ENCODE measurements at regions of chr17 and their contacts with region 1.

Region 1: GRCh38 chr17:17237026-17237799 is at the start of gene FLCN:
- DNase-seq: peak; percentile 92
- H3K4me3 ChIP-seq: peak within 1 kb of the TSS; percentile 86
- H3K27ac ChIP-seq: peak within 1 kb of the TSS; percentile 40
- H3K4me1 ChIP-seq: peaks cover 22% of the 10 kb centered on the region
- CTCF ChIP-seq: no peak
- total RNA-seq, gene FLCN: 12.9 and 20.9 TPM in 2 replicates

Region 2: DNA sequence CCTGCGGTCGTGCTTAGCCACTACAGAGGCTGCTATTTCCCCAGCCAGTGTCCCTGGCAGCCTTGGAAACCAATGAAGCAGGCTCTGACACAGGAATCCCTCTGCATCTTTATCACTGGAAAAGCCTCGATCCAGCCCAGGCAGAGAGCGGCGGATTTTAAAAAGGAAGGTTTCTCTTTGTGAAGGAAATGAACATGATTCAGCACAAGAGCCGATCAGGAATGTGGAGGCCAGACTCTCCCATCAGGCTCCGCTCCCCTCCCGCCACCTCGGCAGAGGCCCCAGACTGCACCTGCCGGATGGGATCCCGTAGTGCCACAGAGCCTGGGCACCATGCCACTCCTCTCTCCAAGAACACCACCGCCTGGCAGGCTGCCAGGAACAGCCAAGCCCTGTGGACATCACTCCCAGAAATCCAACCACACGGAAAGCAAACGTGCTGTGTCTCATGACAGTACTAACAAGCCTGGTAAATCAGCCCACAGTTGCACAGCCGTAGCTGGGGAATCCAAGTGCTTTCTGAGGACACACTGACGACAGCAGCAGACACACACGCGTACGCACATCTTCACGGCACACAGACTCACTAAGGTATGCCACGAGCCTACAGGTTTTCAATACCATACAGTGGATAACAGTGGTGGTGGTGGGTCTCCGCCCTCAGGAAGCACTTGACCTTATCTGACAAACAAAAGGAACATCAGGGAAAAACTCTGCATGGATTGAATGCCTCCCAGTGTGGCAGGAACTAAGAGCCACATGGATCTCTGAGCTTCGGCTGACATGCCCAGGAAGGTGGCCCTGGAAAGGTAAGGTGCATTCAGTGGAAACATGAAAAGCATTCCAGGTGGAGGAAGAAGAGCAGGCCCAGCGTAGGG is 750.6 kb before region 1 on chr17:
- CTCF ChIA-PET with region 1: no interaction called
- POLR2A ChIA-PET with region 1: no interaction called
- intact Hi-C with region 1: no loop called
- DNase-seq: no peak
- H3K4me3 ChIP-seq: no peak overlapping the region
- H3K27ac ChIP-seq: no peak overlapping the region
- H3K4me1 ChIP-seq: no peaks in the 10 kb centered on the region
- CTCF ChIP-seq: no peak

Region 3: GRCh38 chr17:16653209-16654041 is 583.8 kb before region 1 on chr17 and contains the start of gene ZNF624:
- CTCF ChIA-PET with region 1: no interaction called
- POLR2A ChIA-PET with region 1: no interaction called
- intact Hi-C with region 1: loop called (anchors 5 kb)
- DNase-seq: peak; percentile 93
- H3K4me3 ChIP-seq: peak within 1 kb of the TSS; percentile 84
- H3K27ac ChIP-seq: peak within 1 kb of the TSS; percentile 38
- H3K4me1 ChIP-seq: peaks cover 6% of the 10 kb centered on the region
- CTCF ChIP-seq: no peak
- total RNA-seq, gene ZNF624: 3.5 and 4.0 TPM in 2 replicates

Region 4: GRCh38 chr17:17206124-17206912 is 30.9 kb before region 1 on chr17 and contains the start of gene PLD6:
- CTCF ChIA-PET with region 1: no interaction called
- POLR2A ChIA-PET with region 1: no interaction called
- intact Hi-C with region 1: no loop called
- DNase-seq: no peak
- H3K4me3 ChIP-seq: no peak within 1 kb of the TSS
- H3K27ac ChIP-seq: no peak within 1 kb of the TSS
- H3K4me1 ChIP-seq: no peaks in the 10 kb centered on the region
- CTCF ChIP-seq: no peak
- total RNA-seq, gene PLD6: not detected in 2 replicates

Region 5: DNA sequence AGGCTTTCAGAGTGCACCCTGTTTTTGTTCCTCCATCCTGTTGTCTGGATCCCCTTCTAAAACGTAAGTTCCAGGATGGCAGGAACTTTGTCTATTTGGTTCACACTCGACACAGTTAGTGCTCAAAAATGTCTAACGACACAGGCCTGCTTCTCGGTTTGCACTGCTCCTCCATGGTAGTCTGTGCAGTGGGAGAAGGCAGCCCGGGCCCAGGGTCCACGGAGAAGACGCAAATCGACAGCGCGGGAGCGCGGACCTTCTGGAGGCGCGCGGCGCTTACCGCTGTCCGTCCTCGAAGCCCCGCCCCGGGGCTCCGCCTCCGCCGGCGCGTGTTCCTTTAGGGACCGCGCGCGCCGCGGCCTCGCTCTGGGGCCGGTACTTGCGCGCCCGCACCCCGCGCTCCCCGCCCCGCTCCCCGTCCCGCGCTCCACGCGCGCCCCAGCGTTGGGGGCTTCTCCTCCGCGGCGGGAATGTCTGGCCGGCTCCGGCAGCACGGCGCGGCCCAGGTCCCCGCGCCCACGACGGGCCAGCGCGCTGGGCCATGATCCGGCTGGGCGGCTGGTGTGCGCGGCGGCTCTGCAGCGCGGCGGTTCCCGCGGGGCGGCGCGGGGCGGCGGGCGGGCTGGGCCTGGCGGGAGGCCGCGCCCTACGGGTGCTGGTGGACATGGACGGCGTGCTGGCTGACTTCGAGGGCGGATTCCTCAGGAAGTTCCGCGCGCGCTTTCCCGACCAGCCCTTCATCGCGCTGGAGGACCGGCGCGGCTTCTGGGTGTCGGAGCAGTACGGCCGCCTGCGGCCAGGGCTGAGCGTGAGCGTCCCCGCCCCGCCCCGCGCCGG is 66.0 kb after region 1 on chr17 and contains the start of gene NT5M:
- CTCF ChIA-PET with region 1: no interaction called
- POLR2A ChIA-PET with region 1: no interaction called
- intact Hi-C with region 1: loop called (anchors 2 kb)
- DNase-seq: peak; percentile 85
- H3K4me3 ChIP-seq: peak within 1 kb of the TSS; percentile 70
- H3K27ac ChIP-seq: peak within 1 kb of the TSS; percentile 77
- H3K4me1 ChIP-seq: peaks cover 48% of the 10 kb centered on the region
- CTCF ChIP-seq: no peak
- total RNA-seq, gene NT5M: 8.2 and 10.4 TPM in 2 replicates